ENCODE measurements at regions of chr20 and their contacts with region 1.

Region 1: DNA sequence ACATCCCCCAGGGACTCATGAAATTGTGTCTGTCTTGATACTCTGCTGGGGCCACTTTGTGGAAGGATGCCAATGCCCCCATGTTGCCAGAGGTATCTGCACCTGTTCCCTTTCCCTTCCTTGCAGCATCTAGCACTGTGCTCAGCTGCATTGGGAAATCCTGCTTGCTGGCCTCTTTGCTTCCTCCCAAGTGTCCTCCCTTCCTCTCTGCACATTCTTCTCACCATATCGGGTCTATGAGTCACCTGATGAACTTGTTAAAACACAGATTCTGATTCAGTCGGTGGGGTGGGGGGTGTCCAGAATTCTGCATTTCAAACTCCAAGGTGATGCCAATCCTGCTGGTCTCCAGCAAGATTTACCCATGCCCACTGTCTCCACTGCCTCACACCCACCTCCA is 467.8 kb downstream of the PTPRT start:
- DNase-seq: no peak
- H3K4me3 ChIP-seq: no peak overlapping the region
- H3K27ac ChIP-seq: no peak overlapping the region
- H3K4me1 ChIP-seq: no peaks in the 10 kb centered on the region
- H3K27me3 ChIP-seq: no peaks in the 10 kb centered on the region
- CTCF ChIP-seq: no peak

Region 2: DNA sequence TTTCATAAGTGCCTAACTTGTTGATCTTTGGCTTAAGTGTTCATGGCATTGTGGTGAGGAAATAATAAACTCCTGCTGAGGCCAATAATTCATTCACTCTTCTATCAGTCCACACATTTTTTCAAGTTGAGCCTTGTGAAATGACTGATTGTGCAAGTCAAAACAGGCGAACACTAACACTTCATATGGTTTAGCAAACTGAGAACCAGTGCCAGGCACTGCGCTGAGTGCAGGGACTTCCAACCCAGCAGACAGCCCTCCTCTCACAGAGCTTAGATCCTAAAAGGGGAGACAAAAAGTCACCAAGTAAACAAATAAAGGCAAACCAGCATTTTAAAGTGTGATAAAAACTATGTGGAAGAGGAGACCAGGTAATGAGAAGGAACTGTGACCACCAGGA is 32.8 kb after region 1 on chr20:
- CTCF ChIA-PET with region 1: no interaction called
- dilution Hi-C with region 1: loop called (anchors 5 kb)
- in situ Hi-C with region 1: no loop called
- intact Hi-C with region 1: no loop called
- DNase-seq: no peak
- H3K4me3 ChIP-seq: no peak overlapping the region
- H3K27ac ChIP-seq: no peak overlapping the region
- H3K4me1 ChIP-seq: no peaks in the 10 kb centered on the region
- H3K27me3 ChIP-seq: no peaks in the 10 kb centered on the region
- CTCF ChIP-seq: no peak

Region 3: GRCh38 chr20:42986143-42986773 is 264.3 kb after region 1 on chr20:
- CTCF ChIA-PET with region 1: no interaction called
- dilution Hi-C with region 1: no loop called
- in situ Hi-C with region 1: no loop called
- intact Hi-C with region 1: no loop called
- DNase-seq: peak; percentile 16
- H3K4me3 ChIP-seq: no peak overlapping the region
- H3K27ac ChIP-seq: no peak overlapping the region
- H3K4me1 ChIP-seq: no peaks in the 10 kb centered on the region
- H3K27me3 ChIP-seq: no peaks in the 10 kb centered on the region
- CTCF ChIP-seq: no peak

Region 4: DNA sequence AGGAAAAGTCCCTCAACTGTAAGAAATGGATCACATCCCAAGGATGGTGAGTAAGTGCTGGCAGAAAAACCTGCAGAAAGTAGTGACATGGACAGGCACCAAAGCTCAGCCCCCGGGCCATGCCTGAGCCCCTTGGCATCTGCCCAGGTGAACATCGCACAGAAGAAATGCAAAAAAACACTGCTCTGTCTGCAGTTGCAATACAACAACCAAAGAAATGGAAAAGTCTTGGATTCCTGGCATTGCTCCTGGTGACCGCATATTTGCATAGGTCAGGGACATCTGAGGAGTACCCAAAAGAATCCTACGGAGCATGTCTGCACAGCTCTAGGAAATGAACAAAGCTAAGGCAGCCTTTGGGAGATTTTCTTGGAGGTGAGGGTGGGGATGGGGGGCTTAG is 530.8 kb after region 1 on chr20:
- CTCF ChIA-PET with region 1: no interaction called
- dilution Hi-C with region 1: no loop called
- in situ Hi-C with region 1: no loop called
- intact Hi-C with region 1: no loop called
- DNase-seq: no peak
- H3K4me3 ChIP-seq: no peak overlapping the region
- H3K27ac ChIP-seq: no peak overlapping the region
- H3K4me1 ChIP-seq: no peaks in the 10 kb centered on the region
- H3K27me3 ChIP-seq: no peaks in the 10 kb centered on the region
- CTCF ChIP-seq: no peak

Measured in mammary epithelial cell (primary cell).